ENCODE measurements at regions of chr3 and their contacts with region 1.

Region 1: DNA sequence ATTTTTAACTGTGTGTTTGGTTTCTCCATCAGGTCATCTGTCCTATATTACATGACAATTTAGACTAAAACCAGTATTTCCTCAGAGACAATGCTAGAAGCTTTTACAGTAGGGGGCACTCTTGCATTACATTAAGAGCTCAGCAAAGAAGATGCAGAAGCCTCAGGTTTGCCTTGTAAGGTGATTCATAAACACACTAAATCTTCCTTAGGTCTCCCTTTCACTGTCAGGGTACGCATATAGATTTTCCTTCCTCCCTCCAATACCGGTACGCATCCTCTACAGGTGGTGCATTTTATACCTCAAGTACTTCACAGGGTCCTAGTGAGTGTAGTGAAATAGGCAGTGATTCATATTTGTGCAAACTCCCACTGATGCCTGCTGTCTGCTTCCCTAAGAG is 46.5 kb downstream of the CD86 start:
- DNase-seq: peak; percentile 76

Region 2: DNA sequence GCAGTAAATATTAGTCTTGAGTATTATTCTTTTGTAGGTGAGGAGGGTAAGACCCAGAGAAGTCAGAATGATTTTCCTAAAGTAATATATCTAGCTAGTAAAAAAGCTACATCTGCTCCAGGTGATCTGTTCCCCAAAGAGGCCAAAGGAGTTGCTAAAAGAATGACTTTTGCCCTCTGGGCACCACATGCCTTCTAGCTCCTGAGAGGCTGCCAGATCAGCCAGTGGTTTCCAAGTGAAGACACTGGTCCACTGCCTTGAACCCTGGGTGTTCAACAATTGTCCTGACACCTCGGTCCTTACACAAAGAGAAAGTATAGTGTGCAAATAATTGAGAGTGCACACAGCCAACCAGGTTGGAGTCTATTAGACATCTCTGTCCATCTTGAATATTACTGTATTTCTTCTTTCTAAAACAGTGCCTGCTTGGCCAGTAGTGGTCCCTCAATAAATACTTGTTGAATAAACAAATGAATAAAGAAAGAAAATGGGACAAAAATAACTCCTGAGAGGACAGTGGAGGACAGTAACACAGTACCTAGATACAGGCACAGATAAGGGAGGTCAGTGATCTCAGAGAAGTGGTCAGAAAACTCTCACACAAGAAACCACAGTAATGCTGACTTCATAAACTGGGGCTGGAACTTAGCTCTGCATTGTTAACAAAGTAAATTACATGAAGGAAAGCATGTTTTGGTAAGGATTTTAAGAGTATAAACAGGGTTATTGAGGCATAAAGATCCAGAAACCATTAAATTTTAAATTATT is 166.8 kb after region 1 on chr3:
- in situ Hi-C with region 1: loop called (anchors 10 kb)
- DNase-seq: no peak